Gastrocnemius medialis (tissue), 4 donors: ENCODE measurements at regions of chr10 and their contacts with region 1.

Region 1: GRCh38 chr10:8059959-8060703 is 5.6 kb downstream of the GATA3 start:
- DNase-seq: no peak
- ATAC-seq: no peak
- H3K4me3 ChIP-seq: no peak overlapping the region
- H3K27ac ChIP-seq: no peak overlapping the region
- H3K4me1 ChIP-seq: no peaks in the 10 kb centered on the region
- H3K27me3 ChIP-seq: peaks cover 82 to 90% (median 87%) of the 10 kb centered on the region in 3 donors
- CTCF ChIP-seq: no peak
- POLR2A ChIP-seq: no peak

Region 2: GRCh38 chr10:8163829-8164228 is 103.7 kb after region 1 on chr10:
- in situ Hi-C with region 1: no loop called
- intact Hi-C with region 1: no loop called
- DNase-seq: no peak
- ATAC-seq: no peak
- H3K4me3 ChIP-seq: no peak overlapping the region
- H3K27ac ChIP-seq: no peak overlapping the region
- H3K4me1 ChIP-seq: no peaks in the 10 kb centered on the region
- H3K27me3 ChIP-seq: no peaks in the 10 kb centered on the region
- CTCF ChIP-seq: no peak
- POLR2A ChIP-seq: no peak

Region 3: GRCh38 chr10:8365935-8366911 is 306.1 kb after region 1 on chr10:
- in situ Hi-C with region 1: no loop called
- intact Hi-C with region 1: loop called (anchors 10 kb)
- DNase-seq: no peak
- ATAC-seq: no peak
- H3K4me3 ChIP-seq: no peak overlapping the region
- H3K27ac ChIP-seq: no peak overlapping the region
- H3K4me1 ChIP-seq: no peaks in the 10 kb centered on the region
- H3K27me3 ChIP-seq: no peaks in the 10 kb centered on the region
- CTCF ChIP-seq: no peak
- POLR2A ChIP-seq: no peak